PC-9 (cell line): ENCODE measurements at regions of chr1 and their contacts with region 1.

Region 1: GRCh38 chr1:45884700-45885099 is 81.3 kb downstream of the MAST2 start:
- DNase-seq: peak; percentile 9 to 37
- H3K4me3 ChIP-seq: no peak overlapping the region
- H3K27ac ChIP-seq: no peak overlapping the region
- H3K4me1 ChIP-seq: no peaks in the 10 kb centered on the region; the same call in 1 of the 2 replicates
- H3K27me3 ChIP-seq: no peaks in the 10 kb centered on the region
- CTCF ChIP-seq: no peak

Region 2: GRCh38 chr1:45359882-45360513 is 524.7 kb before region 1 on chr1:
- CTCF ChIA-PET with region 1: no interaction called
- POLR2A ChIA-PET with region 1: no interaction called
- intact Hi-C with region 1: loop called (anchors 2 kb)
- DNase-seq: peak; percentile 49 to 64
- H3K4me3 ChIP-seq: no peak overlapping the region
- H3K27ac ChIP-seq: no peak overlapping the region
- H3K4me1 ChIP-seq: peaks cover 21% of the 10 kb centered on the region
- H3K27me3 ChIP-seq: no peaks in the 10 kb centered on the region
- CTCF ChIP-seq: peak; percentile 84

Region 3: GRCh38 chr1:45550401-45551351 is 334.0 kb before region 1 on chr1 and contains the start of gene AKR1A1:
- CTCF ChIA-PET with region 1: interaction called, 10 read pairs
- POLR2A ChIA-PET with region 1: no interaction called
- intact Hi-C with region 1: no loop called
- DNase-seq: peak; percentile 81 to 96
- H3K4me3 ChIP-seq: peak within 1 kb of the TSS; percentile 89
- H3K27ac ChIP-seq: peak within 1 kb of the TSS; percentile 86
- H3K4me1 ChIP-seq: peaks cover 24% of the 10 kb centered on the region
- H3K27me3 ChIP-seq: no peaks in the 10 kb centered on the region
- CTCF ChIP-seq: no peak
- total RNA-seq, gene AKR1A1: 202 and 277 TPM in 2 replicates

Region 4: GRCh38 chr1:45654540-45655280 is 230.0 kb before region 1 on chr1:
- CTCF ChIA-PET with region 1: no interaction called
- POLR2A ChIA-PET with region 1: no interaction called
- intact Hi-C with region 1: loop called (anchors 5 kb)
- DNase-seq: no peak
- H3K4me3 ChIP-seq: no peak overlapping the region
- H3K27ac ChIP-seq: no peak overlapping the region
- H3K4me1 ChIP-seq: no peaks in the 10 kb centered on the region
- H3K27me3 ChIP-seq: no peaks in the 10 kb centered on the region
- CTCF ChIP-seq: no peak

Region 5: GRCh38 chr1:45750298-45751038 is 134.2 kb before region 1 on chr1 and contains the start of gene IPP:
- CTCF ChIA-PET with region 1: no interaction called
- POLR2A ChIA-PET with region 1: no interaction called
- intact Hi-C with region 1: loop called (anchors 5 kb)
- DNase-seq: peak; percentile 92 to 99
- H3K4me3 ChIP-seq: peak within 1 kb of the TSS; percentile 75
- H3K27ac ChIP-seq: peak within 1 kb of the TSS; percentile 78
- H3K4me1 ChIP-seq: peaks cover 11% of the 10 kb centered on the region
- H3K27me3 ChIP-seq: no peaks in the 10 kb centered on the region
- CTCF ChIP-seq: no peak
- total RNA-seq, gene IPP: 25.2 and 25.4 TPM in 2 replicates

Region 6: GRCh38 chr1:45815667-45816458 is 68.8 kb before region 1 on chr1:
- CTCF ChIA-PET with region 1: no interaction called
- POLR2A ChIA-PET with region 1: interaction called, 14 read pairs
- intact Hi-C with region 1: no loop called
- DNase-seq: no peak
- H3K4me3 ChIP-seq: no peak overlapping the region
- H3K27ac ChIP-seq: no peak overlapping the region
- H3K4me1 ChIP-seq: no peaks in the 10 kb centered on the region
- H3K27me3 ChIP-seq: no peaks in the 10 kb centered on the region
- CTCF ChIP-seq: no peak

Region 7: GRCh38 chr1:45854724-45855123 is 30.0 kb before region 1 on chr1:
- CTCF ChIA-PET with region 1: no interaction called
- POLR2A ChIA-PET with region 1: no interaction called
- intact Hi-C with region 1: loop called (anchors 1 kb)
- DNase-seq: peak; percentile 16 to 61
- H3K4me3 ChIP-seq: no peak overlapping the region
- H3K27ac ChIP-seq: no peak overlapping the region
- H3K4me1 ChIP-seq: 0 out of 2 replicates have a peak, but pooled peaks cover 6% of the 10 kb centered on the region
- H3K27me3 ChIP-seq: no peaks in the 10 kb centered on the region
- CTCF ChIP-seq: peak; percentile 15; the same call in 1 of the 2 replicates